ENCODE measurements at regions of chr16 and their contacts with region 1.

Region 1: DNA sequence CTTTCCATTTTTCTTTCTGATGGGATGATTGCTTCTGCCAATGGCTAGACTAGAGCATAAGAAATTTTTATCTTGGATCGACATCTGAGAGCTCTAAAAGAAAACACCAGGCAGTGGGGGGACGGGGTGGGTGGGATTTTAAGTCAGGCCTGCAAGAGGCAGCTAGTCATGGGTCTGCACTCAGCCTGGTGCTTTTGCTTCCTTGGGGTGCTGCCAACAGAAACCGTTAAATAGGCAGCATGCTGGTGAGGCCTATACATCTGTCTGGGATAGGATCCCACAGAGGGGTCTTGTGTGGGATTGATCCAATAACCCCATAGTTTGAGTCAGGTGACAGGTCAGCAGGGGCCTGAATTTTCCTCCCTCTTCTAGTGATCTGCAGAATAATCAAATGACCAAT is 26.9 kb downstream of the ZNRF1 start:
- DNase-seq: no peak
- H3K4me3 ChIP-seq: no peak overlapping the region
- H3K27ac ChIP-seq: peak overlapping the region; percentile 85 to 87
- H3K4me1 ChIP-seq: peaks cover 4 to 13% of the 10 kb centered on the region in 2 donors
- H3K27me3 ChIP-seq: no peaks in the 10 kb centered on the region
- CTCF ChIP-seq: no peak

Region 2: GRCh38 chr16:74984535-74985296 is 41.0 kb before region 1 on chr16 and contains the start of gene WDR59:
- intact Hi-C with region 1: loop called (anchors 1 kb)
- DNase-seq: peak; percentile 100
- H3K4me3 ChIP-seq: peak within 1 kb of the TSS; percentile 81 to 83
- H3K27ac ChIP-seq: peak within 1 kb of the TSS; percentile 58 to 73
- H3K4me1 ChIP-seq: peaks cover 0 to 9% of the 10 kb centered on the region in 2 donors
- H3K27me3 ChIP-seq: no peaks in the 10 kb centered on the region
- CTCF ChIP-seq: no peak
- total RNA-seq, gene WDR59: 22.0 TPM

Region 3: GRCh38 chr16:75011634-75012307 is 14.0 kb before region 1 on chr16:
- intact Hi-C with region 1: loop called (anchors 1 kb)
- DNase-seq: peak in 1 of 2 donors; percentile 81
- H3K4me3 ChIP-seq: peak overlapping the region in 1 of 2 donors; percentile 30
- H3K27ac ChIP-seq: peak overlapping the region; percentile 86 to 88
- H3K4me1 ChIP-seq: peaks cover 4 to 23% of the 10 kb centered on the region in 2 donors
- H3K27me3 ChIP-seq: no peaks in the 10 kb centered on the region
- CTCF ChIP-seq: no peak

Region 4: DNA sequence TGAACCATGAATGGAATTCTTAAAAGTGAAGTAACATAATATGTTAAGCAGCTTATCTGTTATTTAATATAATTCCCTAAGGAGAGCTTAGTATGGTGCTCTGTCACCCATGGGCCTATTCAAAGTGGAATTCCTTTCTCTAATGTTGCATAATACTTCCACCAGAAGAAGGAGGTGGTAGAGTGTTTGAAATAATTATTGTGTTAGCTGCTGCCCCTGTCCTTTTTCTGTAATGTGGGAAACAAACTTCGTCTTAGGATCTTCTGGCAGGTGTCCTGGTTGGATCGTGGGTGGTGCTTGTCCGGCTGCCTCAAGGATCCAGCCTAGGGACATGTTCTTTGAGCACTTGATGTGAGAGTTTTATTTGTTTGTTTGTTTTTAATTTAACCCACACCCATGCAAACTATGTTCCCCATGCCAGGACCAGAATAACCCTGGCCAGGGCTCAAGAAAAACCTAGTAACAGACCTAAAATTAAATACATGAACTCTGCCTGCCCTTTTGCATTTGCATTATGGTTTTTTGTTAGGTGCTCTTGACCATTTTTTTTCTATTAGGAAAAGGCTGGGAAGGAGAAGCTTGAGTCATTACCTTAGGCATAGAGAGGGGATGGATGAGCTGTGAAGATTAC is 19.2 kb after region 1 on chr16:
- intact Hi-C with region 1: loop called (anchors 2 kb)
- DNase-seq: peak in 1 of 2 donors; percentile 85
- H3K4me3 ChIP-seq: no peak overlapping the region
- H3K27ac ChIP-seq: peak overlapping the region; percentile 54 to 72
- H3K4me1 ChIP-seq: peaks cover 13 to 31% of the 10 kb centered on the region in 2 donors
- H3K27me3 ChIP-seq: no peaks in the 10 kb centered on the region
- CTCF ChIP-seq: no peak

Region 5: DNA sequence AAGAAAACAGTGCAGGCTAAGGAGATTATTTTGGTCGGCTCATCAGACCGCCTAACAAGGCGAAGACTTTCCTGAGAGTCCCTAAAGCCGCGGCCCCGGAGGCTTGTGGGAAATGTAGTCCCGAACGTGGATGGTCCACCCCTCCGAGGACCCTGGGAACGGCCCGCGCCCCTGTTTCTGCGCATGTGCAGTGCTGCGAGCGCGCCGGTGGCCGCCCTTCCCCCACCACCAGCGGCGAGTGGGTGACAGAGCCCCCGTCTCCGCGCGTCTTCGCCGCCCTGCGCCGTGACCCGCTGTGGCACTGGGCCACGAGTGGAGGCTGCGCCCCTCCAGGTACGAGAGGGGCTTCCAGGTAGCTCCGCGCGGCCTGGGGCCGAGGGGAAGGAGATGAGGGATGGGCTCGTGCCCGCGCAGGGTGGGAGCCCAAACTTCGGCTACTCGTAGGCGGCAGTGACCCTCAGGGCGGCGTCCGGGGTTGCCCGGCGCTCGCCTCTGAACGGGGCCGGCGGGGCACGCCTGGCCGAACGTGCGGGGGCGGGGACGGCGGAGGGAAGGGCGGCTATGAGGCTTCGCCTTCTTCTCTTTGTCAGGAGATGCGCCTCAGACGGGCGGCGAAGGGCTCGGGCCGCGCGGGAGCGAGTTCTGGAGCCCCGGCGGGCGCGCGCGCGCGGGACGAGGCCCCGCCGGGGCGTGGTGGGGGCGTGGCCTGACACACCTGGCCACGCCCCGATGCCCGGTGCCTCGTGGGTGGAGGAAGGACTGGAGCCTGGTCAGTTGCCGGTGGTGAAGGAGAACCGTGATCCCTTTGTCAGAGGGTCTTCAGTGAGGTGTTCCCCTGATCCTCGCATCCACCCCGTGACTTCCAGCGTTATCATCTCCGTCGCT is 122.8 kb after region 1 on chr16 and contains the start of gene ZFP1:
- intact Hi-C with region 1: no loop called
- DNase-seq: peak; percentile 83 to 98
- H3K4me3 ChIP-seq: peak within 1 kb of the TSS; percentile 99 to 100
- H3K27ac ChIP-seq: peak within 1 kb of the TSS; percentile 93 to 99
- H3K4me1 ChIP-seq: peaks cover 0 to 6% of the 10 kb centered on the region in 2 donors
- H3K27me3 ChIP-seq: no peaks in the 10 kb centered on the region
- CTCF ChIP-seq: no peak
- total RNA-seq, gene ZFP1: 6.8 TPM